ENCODE measurements at regions of chr6 and their contacts with region 1.

Region 1: DNA sequence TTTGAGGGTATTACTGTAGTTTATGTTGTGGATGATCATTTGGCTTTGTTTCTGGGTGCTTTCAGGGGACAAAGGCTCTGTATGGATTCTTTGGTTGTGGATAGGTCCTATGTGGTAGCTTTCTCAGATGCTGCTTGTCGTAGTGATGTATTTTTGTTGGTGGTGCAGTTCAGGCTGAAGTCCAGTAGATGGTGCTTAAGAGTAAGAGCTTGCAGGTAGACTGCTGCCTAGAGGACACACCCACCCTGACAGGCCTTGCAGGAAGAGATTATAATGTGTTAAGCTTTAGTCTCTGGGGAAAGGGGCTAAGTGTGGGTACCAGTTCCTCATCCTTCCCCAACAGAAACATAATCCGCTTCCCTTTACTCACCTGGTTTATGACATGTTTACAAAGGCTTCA is 62.6 kb upstream of the ADGRB3 start:
- DNase-seq: peak; percentile 59
- H3K4me3 Mint-ChIP-seq: no peak overlapping the region
- H3K27ac Mint-ChIP-seq: no peak overlapping the region
- H3K4me1 Mint-ChIP-seq: no peaks in the 10 kb centered on the region
- H3K27me3 Mint-ChIP-seq: no peaks in the 10 kb centered on the region
- CTCF ChIP-seq: peak; percentile 47

Region 2: GRCh38 chr6:68427630-68428029 is 144.9 kb before region 1 on chr6:
- CTCF ChIA-PET with region 1: no interaction called
- intact Hi-C with region 1: no loop called
- DNase-seq: no peak
- H3K4me3 Mint-ChIP-seq: no peak overlapping the region
- H3K27ac Mint-ChIP-seq: no peak overlapping the region
- H3K4me1 Mint-ChIP-seq: no peaks in the 10 kb centered on the region
- H3K27me3 Mint-ChIP-seq: no peaks in the 10 kb centered on the region
- CTCF ChIP-seq: no peak

Region 3: DNA sequence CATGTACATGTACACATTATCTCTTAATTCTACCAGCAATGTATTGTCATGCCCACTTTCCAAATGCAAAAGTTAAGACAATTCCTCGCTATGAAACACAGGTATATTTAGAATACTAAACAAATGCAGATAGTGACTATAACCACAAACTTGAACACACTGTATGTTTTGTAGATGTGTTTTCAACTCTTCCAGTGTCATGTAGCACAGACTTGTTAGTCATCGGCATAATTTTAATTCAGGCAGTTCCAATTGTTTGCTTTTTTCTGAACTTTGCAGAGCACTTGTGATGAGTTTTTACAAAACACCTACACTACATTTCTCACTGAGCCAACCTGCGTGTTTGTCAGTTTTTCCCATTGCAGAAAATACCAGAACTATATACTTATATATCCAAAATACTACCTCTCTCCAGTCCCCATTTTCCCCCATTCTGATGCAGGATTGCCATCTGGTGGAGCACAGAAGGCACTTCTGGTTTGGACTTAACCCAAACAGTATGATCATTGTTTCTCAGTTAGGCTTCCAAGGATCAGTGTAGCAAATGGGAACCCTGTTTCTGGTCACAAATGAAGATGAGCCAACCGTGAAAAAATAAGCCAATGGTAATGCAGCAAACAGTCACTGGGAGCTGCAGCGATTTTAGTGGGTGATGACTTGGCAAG is 206.0 kb after region 1 on chr6:
- CTCF ChIA-PET with region 1: interaction called, 6 read pairs
- intact Hi-C with region 1: loop called (anchors 1 kb)
- DNase-seq: peak; percentile 39
- H3K4me3 Mint-ChIP-seq: no peak overlapping the region
- H3K27ac Mint-ChIP-seq: no peak overlapping the region
- H3K4me1 Mint-ChIP-seq: no peaks in the 10 kb centered on the region
- H3K27me3 Mint-ChIP-seq: no peaks in the 10 kb centered on the region
- CTCF ChIP-seq: peak; percentile 61